ENCODE measurements at regions of chr14 and their contacts with region 1.

Region 1: GRCh38 chr14:69242311-69243224 is 17.4 kb upstream of the GALNT16 start:
- DNase-seq: peak; percentile 35 to 50
- ATAC-seq: peak; percentile 78 to 86
- H3K4me3 ChIP-seq: no peak overlapping the region
- H3K27ac ChIP-seq: peak overlapping the region in 2 of 4 donors; percentile 12 to 23
- H3K4me1 ChIP-seq: peaks cover 5 to 12% of the 10 kb centered on the region in 2 donors
- H3K27me3 ChIP-seq: no peaks in the 10 kb centered on the region
- CTCF ChIP-seq: peak; percentile 72 to 78 (median 77)
- POLR2A ChIP-seq: no peak

Region 2: GRCh38 chr14:69346710-69347109 is 104.1 kb after region 1 on chr14:
- in situ Hi-C with region 1: no loop called
- intact Hi-C with region 1: loop called (anchors 10 kb)
- DNase-seq: no peak
- ATAC-seq: no peak
- H3K4me3 ChIP-seq: no peak overlapping the region
- H3K27ac ChIP-seq: no peak overlapping the region
- H3K4me1 ChIP-seq: no peaks in the 10 kb centered on the region
- H3K27me3 ChIP-seq: no peaks in the 10 kb centered on the region
- CTCF ChIP-seq: peak in 4 of 5 experiments; percentile 30 to 60 (median 38)
- POLR2A ChIP-seq: no peak

Region 3: DNA sequence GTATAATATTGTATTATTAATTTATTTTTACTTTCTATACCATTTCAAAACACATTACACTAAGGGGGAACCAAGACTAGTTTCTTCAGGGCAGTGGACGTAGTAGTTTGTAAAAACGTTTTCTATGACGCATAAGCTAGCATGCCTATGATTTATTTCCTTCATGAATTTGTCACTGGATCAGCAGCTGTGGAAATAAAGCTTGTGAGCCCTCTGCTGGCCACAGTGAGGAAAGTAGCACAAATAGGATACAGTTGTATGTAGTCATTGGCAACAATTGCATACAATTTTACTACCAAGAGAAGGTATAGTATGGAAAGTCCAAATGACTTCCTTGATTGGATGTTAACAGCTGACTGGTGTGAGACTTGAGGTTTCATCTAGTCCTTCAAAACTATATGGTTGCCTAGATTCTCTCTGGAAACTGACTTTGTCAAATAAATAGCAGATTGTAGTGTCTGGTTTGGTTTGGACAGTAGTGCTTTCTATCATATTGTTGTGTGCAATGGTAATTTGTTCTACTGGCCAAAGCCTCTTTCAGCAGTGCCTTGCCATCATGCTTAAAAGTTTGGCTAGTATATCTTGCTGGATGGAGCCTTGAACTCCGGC is 217.6 kb after region 1 on chr14:
- in situ Hi-C with region 1: loop called (anchors 5 to 25 kb)
- intact Hi-C with region 1: loop called (anchors 1 kb)
- DNase-seq: peak; percentile 20 to 66
- ATAC-seq: peak; percentile 99
- H3K4me3 ChIP-seq: no peak overlapping the region
- H3K27ac ChIP-seq: no peak overlapping the region
- H3K4me1 ChIP-seq: no peaks in the 10 kb centered on the region
- H3K27me3 ChIP-seq: no peaks in the 10 kb centered on the region
- CTCF ChIP-seq: peak; percentile 70 to 74 (median 73)
- POLR2A ChIP-seq: no peak

Region 4: GRCh38 chr14:69535230-69535848 is 292.8 kb after region 1 on chr14:
- in situ Hi-C with region 1: no loop called
- intact Hi-C with region 1: no loop called
- DNase-seq: no peak
- ATAC-seq: peak in 1 of 2 donors; percentile 68
- H3K4me3 ChIP-seq: no peak overlapping the region
- H3K27ac ChIP-seq: no peak overlapping the region
- H3K4me1 ChIP-seq: peaks cover 0 to 3% of the 10 kb centered on the region in 2 donors
- H3K27me3 ChIP-seq: no peaks in the 10 kb centered on the region
- CTCF ChIP-seq: peak in 3 of 5 experiments; percentile 19 to 63 (median 51)
- POLR2A ChIP-seq: no peak

Measured in gastrocnemius medialis (tissue), 4 donors.